ENCODE measurements at regions of chr2 and their contacts with region 1.

Region 1: GRCh38 chr2:40554668-40555285 is 102.9 kb upstream of the SLC8A1 start:
- DNase-seq: peak; percentile 58 to 80 (median 59)
- ATAC-seq: peak; percentile 76 to 86
- H3K4me3 ChIP-seq: no peak overlapping the region
- H3K27ac ChIP-seq: no peak overlapping the region
- H3K4me1 ChIP-seq: peaks cover 5% of the 10 kb centered on the region
- H3K27me3 ChIP-seq: no peaks in the 10 kb centered on the region

Region 2: DNA sequence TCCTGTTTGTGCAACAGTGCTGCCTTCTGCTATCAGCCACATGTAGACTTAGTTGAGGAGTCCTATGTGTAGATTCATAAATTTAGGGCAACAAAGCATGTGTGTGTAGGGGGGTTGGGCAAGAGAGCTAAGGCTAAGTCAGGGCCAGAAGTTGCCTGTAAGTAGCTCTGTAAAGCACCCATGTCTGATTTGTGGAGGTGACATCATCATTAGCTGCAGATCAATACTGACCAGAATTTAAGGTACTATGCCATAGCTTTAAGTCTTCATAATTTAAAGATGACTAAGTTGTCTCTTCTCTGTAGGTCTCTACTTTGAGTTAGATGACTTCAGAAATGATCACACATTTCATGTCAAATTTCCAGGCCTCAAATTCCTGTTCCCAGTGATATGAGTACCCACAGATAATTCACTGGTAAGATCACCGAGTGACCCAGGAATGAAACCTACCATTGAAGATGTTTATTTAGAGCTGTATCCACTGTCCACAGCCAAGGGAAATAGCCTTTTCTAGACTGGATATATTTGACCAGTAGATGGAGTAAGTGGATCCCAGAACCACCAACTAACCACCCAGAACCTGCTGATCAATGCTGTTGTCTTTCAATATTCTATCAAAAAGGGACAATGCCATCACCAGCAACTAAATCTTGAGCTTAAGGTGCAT is 341.8 kb before region 1 on chr2:
- intact Hi-C with region 1: loop called in 1 of 4 experiments (anchors 10 kb)
- DNase-seq: no peak
- ATAC-seq: peak; percentile 67 to 76
- H3K4me3 ChIP-seq: no peak overlapping the region
- H3K27ac ChIP-seq: no peak overlapping the region
- H3K4me1 ChIP-seq: no peaks in the 10 kb centered on the region
- H3K27me3 ChIP-seq: no peaks in the 10 kb centered on the region

Region 3: GRCh38 chr2:40244675-40245074 is 310.1 kb before region 1 on chr2:
- intact Hi-C with region 1: loop called in 1 of 4 experiments (anchors 10 kb)
- DNase-seq: peak; percentile 57 to 67 (median 59)
- ATAC-seq: peak; percentile 64 to 76
- H3K4me3 ChIP-seq: no peak overlapping the region
- H3K27ac ChIP-seq: peak overlapping the region; percentile 50
- H3K4me1 ChIP-seq: peaks cover 11% of the 10 kb centered on the region
- H3K27me3 ChIP-seq: no peaks in the 10 kb centered on the region

Region 4: DNA sequence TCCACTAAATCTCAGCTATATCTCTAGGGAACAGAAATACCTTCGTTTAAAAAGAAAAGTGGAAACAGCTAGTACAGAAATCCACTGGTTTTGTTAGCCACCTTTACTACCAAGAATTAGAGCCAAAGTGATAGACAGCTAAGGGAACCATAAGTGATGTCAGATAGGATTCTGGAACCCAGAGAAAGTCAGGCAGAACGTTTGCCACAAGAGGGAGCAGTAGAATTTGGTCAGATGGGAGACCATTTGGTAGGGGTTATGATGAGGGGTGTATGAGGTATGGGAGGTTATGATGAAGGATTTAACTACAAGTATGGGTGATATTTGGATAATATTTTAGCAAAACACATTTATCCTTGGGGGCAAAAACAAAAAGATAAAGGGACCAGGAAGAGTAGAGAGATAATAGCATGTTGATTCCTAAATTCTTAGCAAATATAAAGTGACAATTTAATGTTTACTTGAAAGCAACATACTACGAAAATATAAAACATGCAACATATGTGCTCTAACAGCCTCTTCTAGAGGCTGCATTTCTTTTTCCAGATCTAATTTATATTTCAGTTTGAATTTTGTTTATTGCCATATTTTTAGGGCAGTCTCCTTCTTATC is 106.2 kb before region 1 on chr2:
- intact Hi-C with region 1: loop called in 2 of 4 experiments (anchors 5 to 10 kb)
- DNase-seq: no peak
- ATAC-seq: no peak
- H3K4me3 ChIP-seq: no peak overlapping the region
- H3K27ac ChIP-seq: no peak overlapping the region
- H3K4me1 ChIP-seq: peaks cover 4% of the 10 kb centered on the region
- H3K27me3 ChIP-seq: no peaks in the 10 kb centered on the region